Psoas muscle (tissue), 8 donors: ENCODE measurements at regions of chr2 and their contacts with region 1.

Region 1: GRCh38 chr2:198309673-198310280 is 505.4 kb downstream of the PLCL1 start:
- DNase-seq: no peak
- ATAC-seq: peak in 2 of 4 donors; percentile 46 to 73
- H3K4me3 ChIP-seq: no peak overlapping the region
- H3K27ac ChIP-seq: no peak overlapping the region
- H3K4me1 ChIP-seq: no peaks in the 10 kb centered on the region
- H3K27me3 ChIP-seq: peaks cover 0 to 4% (median 0%) of the 10 kb centered on the region in 3 donors
- CTCF ChIP-seq: peak; percentile 80

Region 2: DNA sequence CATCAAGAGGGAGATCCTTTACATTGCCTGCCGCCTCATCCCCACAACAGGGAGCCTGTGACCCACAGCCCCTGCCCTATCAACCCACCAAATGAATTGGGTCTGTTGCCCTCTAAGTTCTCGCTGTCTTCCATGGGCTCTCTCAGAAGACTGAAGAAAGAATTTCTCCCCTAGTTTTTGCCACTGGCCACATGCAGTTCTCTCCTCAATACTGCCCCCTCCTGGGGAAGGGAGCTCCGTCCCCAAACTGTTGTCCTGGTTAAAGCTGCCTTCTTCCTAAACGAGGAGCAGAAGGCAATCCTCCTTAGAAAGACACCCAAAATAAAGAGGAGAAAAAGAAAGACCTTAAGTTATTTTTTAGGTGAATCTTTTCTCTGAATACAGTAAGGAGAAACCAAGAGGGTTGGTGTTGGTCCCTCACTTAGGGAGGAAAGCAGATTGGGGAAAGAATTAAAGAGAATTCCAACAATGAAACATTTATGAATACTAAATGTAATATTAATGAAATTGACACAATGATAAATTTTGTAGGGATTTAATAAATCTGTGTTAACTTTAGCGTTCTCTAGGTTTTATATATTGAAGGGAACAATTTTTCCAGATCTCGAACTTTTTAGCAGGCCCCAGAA is 1179.1 kb after region 1 on chr2:
- intact Hi-C with region 1: loop called in 1 of 2 experiments (anchors 10 kb)
- DNase-seq: peak in 1 of 2 donors; percentile 57
- ATAC-seq: peak in 2 of 4 donors; percentile 47
- H3K4me3 ChIP-seq: no peak overlapping the region
- H3K27ac ChIP-seq: no peak overlapping the region
- H3K4me1 ChIP-seq: no peaks in the 10 kb centered on the region
- H3K27me3 ChIP-seq: no peaks in the 10 kb centered on the region
- CTCF ChIP-seq: peak; percentile 58